ENCODE measurements at regions of chr22 and their contacts with region 1.

Region 1: GRCh38 chr22:37608477-37609239 is at the start of gene GGA1:
- DNase-seq: peak; percentile 80
- H3K4me3 ChIP-seq: peak within 1 kb of the TSS; percentile 65
- H3K27me3 ChIP-seq: peaks cover 3% of the 10 kb centered on the region; the same call in 1 of the 2 replicates
- CTCF ChIP-seq: no peak
- polyA plus RNA-seq, gene GGA1: 22.5 and 34.6 TPM in 2 replicates

Region 2: GRCh38 chr22:37544955-37545699 is 63.5 kb before region 1 on chr22:
- CTCF ChIA-PET with region 1: interaction called, 28 read pairs
- POLR2A ChIA-PET with region 1: no interaction called
- DNase-seq: no peak
- H3K4me3 ChIP-seq: peak overlapping the region; percentile 33
- H3K27me3 ChIP-seq: no peaks in the 10 kb centered on the region
- CTCF ChIP-seq: peak; percentile 83

Region 3: GRCh38 chr22:37566903-37567820 is 41.5 kb before region 1 on chr22:
- CTCF ChIA-PET with region 1: interaction called, 36 read pairs
- POLR2A ChIA-PET with region 1: no interaction called
- DNase-seq: no peak
- H3K4me3 ChIP-seq: no peak overlapping the region
- H3K27me3 ChIP-seq: no peaks in the 10 kb centered on the region
- CTCF ChIP-seq: peak; percentile 91

Region 4: GRCh38 chr22:37633625-37634416 is 25.2 kb after region 1 on chr22:
- CTCF ChIA-PET with region 1: interaction called, 15 read pairs
- POLR2A ChIA-PET with region 1: interaction called, 6 read pairs
- DNase-seq: peak; percentile 33
- H3K4me3 ChIP-seq: no peak overlapping the region
- H3K27me3 ChIP-seq: no peaks in the 10 kb centered on the region
- CTCF ChIP-seq: peak; percentile 48; the same call in 1 of the 2 replicates

Region 5: DNA sequence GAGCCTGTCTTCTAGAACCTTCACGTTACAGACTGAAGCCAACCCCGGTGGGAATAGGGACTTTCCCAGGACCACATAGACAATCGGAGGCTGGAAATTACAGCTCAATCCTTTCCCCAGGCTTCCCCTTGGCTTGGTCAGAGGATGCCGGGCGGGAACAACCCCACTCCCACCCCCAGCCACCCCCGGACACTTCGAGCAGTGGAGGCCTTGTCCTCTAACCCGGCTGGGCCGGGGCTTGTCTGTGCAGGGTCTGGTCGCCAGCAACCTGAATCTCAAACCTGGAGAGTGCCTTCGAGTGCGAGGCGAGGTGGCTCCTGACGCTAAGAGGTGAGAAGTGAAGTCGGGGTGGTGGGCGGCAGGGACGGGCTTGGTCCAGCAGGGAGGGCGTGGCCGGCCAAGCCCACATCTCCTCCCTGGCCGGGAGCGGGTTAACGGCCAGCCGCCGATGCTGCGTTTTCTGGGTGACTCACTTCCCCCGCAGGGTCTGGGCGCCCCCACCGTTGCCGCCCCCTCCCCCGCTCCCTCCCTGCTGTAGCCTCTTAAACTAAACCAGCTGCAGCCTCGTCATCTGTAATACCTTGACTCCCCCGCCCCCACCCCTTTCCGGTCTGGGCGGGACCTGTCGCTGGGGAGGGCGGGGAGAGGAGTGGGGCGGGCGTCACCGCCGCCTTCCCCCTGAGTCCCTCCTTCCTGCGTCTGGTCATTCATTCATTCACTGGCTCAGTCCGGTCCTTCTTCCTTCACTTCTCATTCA is 68.3 kb after region 1 on chr22:
- CTCF ChIA-PET with region 1: interaction called, 17 read pairs
- POLR2A ChIA-PET with region 1: interaction called, 16 read pairs
- DNase-seq: peak; percentile 87
- H3K4me3 ChIP-seq: peak overlapping the region; percentile 93
- H3K27me3 ChIP-seq: no peaks in the 10 kb centered on the region
- CTCF ChIP-seq: no peak

Region 6: GRCh38 chr22:37906364-37907020 is 297.8 kb after region 1 on chr22:
- CTCF ChIA-PET with region 1: no interaction called
- POLR2A ChIA-PET with region 1: no interaction called
- DNase-seq: no peak
- H3K4me3 ChIP-seq: peak overlapping the region; percentile 77
- H3K27me3 ChIP-seq: no peaks in the 10 kb centered on the region
- CTCF ChIP-seq: no peak

Measured in BJ (cell line).